ENCODE measurements at regions of chr19 and their contacts with region 1.

Region 1: DNA sequence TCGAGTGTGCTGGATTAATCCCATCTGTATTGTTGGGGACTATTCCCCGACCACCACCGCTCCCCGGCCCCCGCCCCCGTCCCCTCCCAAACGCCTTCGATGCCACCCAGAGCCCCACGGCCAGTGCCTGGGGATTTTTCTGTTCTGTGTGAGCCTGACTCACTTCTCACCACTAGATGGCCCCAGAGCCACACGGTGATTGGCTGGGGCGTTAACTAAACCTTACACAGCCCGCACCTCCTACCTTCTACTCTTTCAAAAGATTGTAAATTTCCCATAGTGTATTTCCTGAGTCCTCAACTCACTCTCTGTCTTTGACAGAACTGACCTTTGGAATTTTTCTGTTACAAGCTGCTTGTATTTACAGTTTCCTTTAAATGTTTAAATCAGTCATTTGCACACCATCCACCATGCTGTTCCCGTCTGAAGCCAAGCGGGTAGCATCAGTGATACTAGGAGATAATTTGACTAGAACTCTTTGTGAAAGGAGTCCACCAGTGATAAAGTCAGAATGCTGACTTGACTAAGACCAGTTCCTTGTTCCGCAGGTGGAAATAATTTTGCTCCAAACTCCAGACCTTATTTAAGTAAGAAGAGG is 61.4 kb downstream of the RFX2 start:
- DNase-seq: peak; percentile 77
- H3K4me3 ChIP-seq: no peak overlapping the region
- H3K27ac ChIP-seq: peak overlapping the region; percentile 20
- H3K4me1 ChIP-seq: peaks cover 4% of the 10 kb centered on the region
- H3K27me3 ChIP-seq: no peaks in the 10 kb centered on the region
- CTCF ChIP-seq: peak; percentile 61 to 83
- POLR2A ChIP-seq: no peak

Region 2: DNA sequence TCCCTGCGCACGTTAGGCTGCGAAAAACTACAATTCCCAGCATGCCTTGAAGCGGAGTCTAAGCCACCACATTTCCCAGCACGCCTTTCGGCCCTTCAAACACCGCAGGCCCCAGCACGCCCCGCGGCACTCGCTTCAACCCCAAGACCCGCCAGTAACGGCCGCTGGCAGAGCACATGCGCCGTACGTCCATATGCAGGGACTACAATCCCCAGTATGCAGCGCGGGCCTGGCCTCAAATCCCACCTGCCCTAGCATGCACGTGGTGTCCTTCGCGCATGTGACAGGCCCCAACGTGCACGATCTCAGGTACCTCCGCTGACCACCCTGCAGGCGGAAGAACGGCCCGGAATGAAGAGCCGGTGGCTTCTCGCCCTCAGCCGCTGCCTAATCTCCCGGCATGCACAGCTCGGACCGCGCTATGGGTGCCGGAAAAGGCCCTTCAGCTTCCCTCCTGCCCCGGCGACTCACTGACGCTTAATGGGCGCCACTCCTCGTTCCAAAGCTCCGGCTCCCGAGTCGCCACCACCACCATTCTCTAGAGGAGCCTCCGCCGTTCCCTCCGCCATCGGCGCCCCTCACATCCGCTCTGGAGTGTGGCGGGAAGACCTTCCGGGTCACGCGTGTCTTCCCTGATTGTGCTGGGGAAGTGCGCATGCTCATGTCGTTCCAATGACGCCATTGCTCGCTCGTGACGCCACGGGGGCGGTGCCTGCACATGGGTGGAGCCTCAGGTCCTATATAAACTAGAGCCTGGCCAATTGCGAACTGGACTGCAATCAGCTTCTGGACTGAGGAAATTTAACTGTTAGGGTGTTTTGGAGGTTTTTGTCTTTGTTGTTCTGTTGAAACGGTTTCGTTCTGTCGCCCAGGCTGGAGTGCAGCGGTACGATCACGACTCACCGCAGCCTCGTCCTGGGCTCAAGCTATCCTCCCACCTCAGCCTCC is 258.1 kb before region 1 on chr19 and contains the start of gene DUS3L:
- CTCF ChIA-PET with region 1: no interaction called
- POLR2A ChIA-PET with region 1: no interaction called
- dilution Hi-C with region 1: no loop called
- intact Hi-C with region 1: no loop called
- DNase-seq: peak; percentile 99
- H3K4me3 ChIP-seq: peak within 1 kb of the TSS; percentile 17 to 75 (median 55)
- H3K27ac ChIP-seq: peak within 1 kb of the TSS; percentile 82
- H3K4me1 ChIP-seq: peaks cover 5% of the 10 kb centered on the region
- H3K27me3 ChIP-seq: no peaks in the 10 kb centered on the region
- CTCF ChIP-seq: no peak
- POLR2A ChIP-seq: peak; percentile 68
- total RNA-seq, gene DUS3L: 38.9 and 40.8 TPM in 2 replicates

Region 3: GRCh38 chr19:5987077-5987818 is 61.7 kb before region 1 on chr19:
- CTCF ChIA-PET with region 1: interaction called, 25 read pairs
- POLR2A ChIA-PET with region 1: no interaction called
- dilution Hi-C with region 1: no loop called
- intact Hi-C with region 1: loop called (anchors 1 kb)
- DNase-seq: peak; percentile 86
- H3K4me3 ChIP-seq: no peak overlapping the region
- H3K27ac ChIP-seq: no peak overlapping the region
- H3K4me1 ChIP-seq: peaks cover 17% of the 10 kb centered on the region
- H3K27me3 ChIP-seq: no peaks in the 10 kb centered on the region
- CTCF ChIP-seq: peak; percentile 86 to 94
- POLR2A ChIP-seq: no peak

Region 4: GRCh38 chr19:6092329-6093286 is 43.7 kb after region 1 on chr19:
- CTCF ChIA-PET with region 1: interaction called, 10 read pairs
- POLR2A ChIA-PET with region 1: no interaction called
- dilution Hi-C with region 1: no loop called
- intact Hi-C with region 1: no loop called
- DNase-seq: peak; percentile 70
- H3K4me3 ChIP-seq: no peak overlapping the region
- H3K27ac ChIP-seq: peak overlapping the region; percentile 51
- H3K4me1 ChIP-seq: peaks cover 32% of the 10 kb centered on the region
- H3K27me3 ChIP-seq: no peaks in the 10 kb centered on the region
- CTCF ChIP-seq: no peak
- POLR2A ChIP-seq: no peak

Region 5: GRCh38 chr19:6167115-6167514 is 118.2 kb after region 1 on chr19:
- CTCF ChIA-PET with region 1: interaction called, 5 read pairs
- POLR2A ChIA-PET with region 1: no interaction called
- dilution Hi-C with region 1: no loop called
- intact Hi-C with region 1: loop called (anchors 2 kb)
- DNase-seq: no peak
- H3K4me3 ChIP-seq: no peak overlapping the region
- H3K27ac ChIP-seq: no peak overlapping the region
- H3K4me1 ChIP-seq: no peaks in the 10 kb centered on the region
- H3K27me3 ChIP-seq: peaks cover 3 to 8% of the 10 kb centered on the region in 2 experiments
- CTCF ChIP-seq: no peak
- POLR2A ChIP-seq: no peak

Region 6: DNA sequence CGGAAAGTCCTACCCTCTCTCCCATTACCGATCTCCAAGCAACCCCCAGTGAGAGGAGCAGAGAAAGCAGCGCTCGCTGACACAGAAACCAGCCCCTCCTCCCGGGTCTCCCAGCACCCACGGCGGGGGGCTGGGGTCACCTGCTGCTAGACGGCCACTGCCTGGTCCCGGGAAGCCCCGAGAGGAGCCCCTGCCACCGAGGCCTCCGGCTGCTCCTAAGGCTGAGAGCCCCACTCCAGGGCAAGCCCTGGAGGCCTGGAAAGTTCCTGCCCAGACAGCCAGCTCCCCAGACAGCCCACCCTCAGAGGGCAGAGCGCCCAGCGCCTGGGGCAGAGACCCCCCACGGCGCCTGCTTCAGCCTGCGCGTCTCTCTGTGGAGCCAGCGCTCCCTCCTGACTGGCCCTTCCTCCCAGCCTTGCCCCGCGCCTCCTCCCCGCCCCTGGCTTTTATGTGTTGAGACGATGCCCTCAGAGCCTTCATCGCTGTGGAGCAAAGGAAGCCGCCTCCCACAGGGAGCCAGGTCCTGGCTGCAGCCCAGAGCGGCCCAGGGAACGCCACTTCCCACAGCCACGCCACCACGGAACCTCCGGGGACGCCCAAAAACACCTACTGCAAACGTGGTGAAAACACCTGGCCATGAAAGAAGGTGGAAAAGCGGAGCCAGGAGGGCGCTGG is 179.8 kb after region 1 on chr19:
- CTCF ChIA-PET with region 1: no interaction called
- POLR2A ChIA-PET with region 1: no interaction called
- dilution Hi-C with region 1: no loop called
- intact Hi-C with region 1: no loop called
- DNase-seq: no peak
- H3K4me3 ChIP-seq: no peak overlapping the region
- H3K27ac ChIP-seq: no peak overlapping the region
- H3K4me1 ChIP-seq: peaks cover 5% of the 10 kb centered on the region
- H3K27me3 ChIP-seq: no peaks in the 10 kb centered on the region
- CTCF ChIP-seq: no peak
- POLR2A ChIP-seq: no peak

Region 7: GRCh38 chr19:6424939-6425731 is 376.2 kb after region 1 on chr19:
- CTCF ChIA-PET with region 1: interaction called, 3 read pairs
- POLR2A ChIA-PET with region 1: no interaction called
- dilution Hi-C with region 1: no loop called
- intact Hi-C with region 1: loop called (anchors 5 kb)
- DNase-seq: peak; percentile 100
- H3K4me3 ChIP-seq: no peak overlapping the region
- H3K27ac ChIP-seq: no peak overlapping the region
- H3K4me1 ChIP-seq: peaks cover 8% of the 10 kb centered on the region
- H3K27me3 ChIP-seq: no peaks in the 10 kb centered on the region
- CTCF ChIP-seq: no peak
- POLR2A ChIP-seq: peak; percentile 41